SK-N-SH (cell line): ENCODE measurements at regions of chr3 and their contacts with region 1.

Region 1: DNA sequence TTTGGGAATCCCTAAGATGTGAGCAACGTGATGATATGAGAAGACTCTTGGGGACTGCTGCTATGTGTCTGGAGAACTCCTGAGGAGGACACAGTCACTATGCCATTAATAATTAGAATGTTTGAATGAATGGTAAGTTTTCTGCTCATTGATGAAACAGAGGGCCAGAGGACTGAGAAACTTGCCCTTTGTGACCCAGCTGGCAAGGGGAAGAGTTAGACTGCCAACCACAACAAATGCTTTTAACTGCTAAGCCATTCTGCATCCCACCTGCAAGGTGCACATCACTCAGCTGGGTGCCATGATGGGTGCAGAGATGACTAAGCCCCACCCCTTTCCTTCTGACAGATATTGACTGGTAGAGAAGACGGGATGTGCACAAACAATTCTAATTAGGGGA is 249.6 kb downstream of the THRB start:
- DNase-seq: no peak
- H3K4me3 ChIP-seq: no peak overlapping the region
- H3K27ac ChIP-seq: no peak overlapping the region
- H3K4me1 ChIP-seq: peaks cover 0 to 10% of the 10 kb centered on the region in 2 experiments; a peak in 1 of 4 replicates
- H3K27me3 ChIP-seq: no peaks in the 10 kb centered on the region; the same call in 1 of the 2 replicates
- CTCF ChIP-seq: no peak
- EP300 ChIP-seq: no peak
- RAD21 ChIP-seq: no peak

Region 2: DNA sequence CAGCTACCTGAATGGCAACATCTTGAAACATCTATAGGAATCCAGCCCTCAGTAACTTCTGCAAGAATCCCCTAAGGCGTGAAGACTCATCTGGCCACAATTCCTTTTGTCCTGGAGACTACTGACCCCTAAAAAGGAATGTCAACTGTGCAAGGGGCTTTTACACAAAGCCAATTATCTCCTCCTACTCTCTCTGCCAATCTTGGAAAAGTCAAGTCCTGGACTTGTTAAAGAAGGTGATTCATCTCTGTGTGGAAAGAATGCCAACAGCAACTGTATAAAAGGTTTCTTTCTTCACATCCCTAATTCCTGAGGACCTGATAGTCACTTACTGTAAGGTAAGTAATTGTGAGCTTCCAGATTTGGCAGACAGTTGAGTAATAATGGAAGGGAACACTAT is 227.3 kb after region 1 on chr3:
- CTCF ChIA-PET with region 1: no interaction called
- POLR2A ChIA-PET with region 1: no interaction called
- DNase-seq: no peak
- H3K4me3 ChIP-seq: no peak overlapping the region
- H3K27ac ChIP-seq: no peak overlapping the region
- H3K4me1 ChIP-seq: no peaks in the 10 kb centered on the region
- H3K27me3 ChIP-seq: no peaks in the 10 kb centered on the region
- CTCF ChIP-seq: no peak
- EP300 ChIP-seq: no peak
- RAD21 ChIP-seq: no peak

Region 3: GRCh38 chr3:24680214-24680967 is 435.3 kb after region 1 on chr3:
- CTCF ChIA-PET with region 1: interaction called, 11 read pairs
- POLR2A ChIA-PET with region 1: no interaction called
- DNase-seq: peak; percentile 59
- H3K4me3 ChIP-seq: no peak overlapping the region; a peak in 1 of 4 replicates
- H3K27ac ChIP-seq: no peak overlapping the region
- H3K4me1 ChIP-seq: no peaks in the 10 kb centered on the region; a peak in 1 of 4 replicates
- H3K27me3 ChIP-seq: no peaks in the 10 kb centered on the region
- CTCF ChIP-seq: peak; percentile 85
- EP300 ChIP-seq: no peak
- RAD21 ChIP-seq: peak; percentile 66